Common myeloid progenitor, CD34-positive (primary cell): ENCODE measurements at regions of chr1 and their contacts with region 1.

Region 1: DNA sequence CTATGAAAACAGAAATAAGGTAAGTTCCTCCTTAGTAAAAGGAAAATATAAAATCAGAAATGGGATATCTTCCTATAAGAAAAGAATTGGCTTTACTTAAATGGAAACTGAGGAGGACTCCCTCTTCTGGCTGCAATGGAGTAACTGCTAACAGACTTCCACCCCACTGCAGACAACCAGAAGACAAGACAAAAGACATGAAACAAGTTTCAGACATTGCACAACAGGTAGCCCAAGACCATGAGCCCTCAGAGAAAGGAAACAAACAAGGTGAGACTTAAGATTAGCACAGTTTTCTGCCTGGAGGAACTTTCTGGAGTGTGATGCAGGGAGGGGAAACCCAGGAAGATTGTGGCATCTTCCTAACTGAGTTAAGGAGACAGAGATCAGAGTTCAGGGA is 17.0 kb upstream of the OLFML2B start:
- DNase-seq: peak in 2 of 3 donors; percentile 22 to 34
- H3K4me3 ChIP-seq: no peak overlapping the region
- H3K27ac ChIP-seq: no peak overlapping the region
- H3K4me1 ChIP-seq: peaks cover 0 to 4% (median 1%) of the 10 kb centered on the region in 4 experiments
- H3K27me3 ChIP-seq: no peaks in the 10 kb centered on the region

Region 2: DNA sequence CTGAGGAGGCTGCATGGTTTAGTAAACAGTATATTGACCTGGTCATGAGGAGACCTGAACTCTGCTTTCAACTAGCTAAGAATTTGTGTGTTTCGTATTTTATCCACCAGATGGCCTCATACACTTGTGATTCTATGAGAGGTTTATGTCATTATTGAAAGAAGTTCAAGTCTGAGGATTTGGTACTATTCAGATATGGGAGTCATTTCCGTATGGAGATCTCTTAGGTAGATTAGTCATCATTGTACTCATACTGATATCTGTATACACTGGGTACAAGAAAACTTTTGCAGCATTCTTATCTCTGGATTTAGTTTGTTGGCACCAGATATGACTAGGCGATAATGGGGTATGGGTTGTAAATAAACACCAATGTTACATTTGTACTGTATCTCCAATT is 247.9 kb before region 1 on chr1:
- CTCF ChIA-PET with region 1: interaction called, 144 read pairs
- POLR2A ChIA-PET with region 1: no interaction called
- DNase-seq: peak; percentile 54 to 75 (median 72)
- H3K4me3 ChIP-seq: no peak overlapping the region
- H3K27ac ChIP-seq: no peak overlapping the region
- H3K4me1 ChIP-seq: no peaks in the 10 kb centered on the region
- H3K27me3 ChIP-seq: no peaks in the 10 kb centered on the region

Region 3: GRCh38 chr1:161801955-161802354 is 238.7 kb before region 1 on chr1:
- CTCF ChIA-PET with region 1: interaction called, 144 read pairs
- POLR2A ChIA-PET with region 1: no interaction called
- DNase-seq: no peak
- H3K4me3 ChIP-seq: no peak overlapping the region
- H3K27ac ChIP-seq: no peak overlapping the region
- H3K4me1 ChIP-seq: no peaks in the 10 kb centered on the region
- H3K27me3 ChIP-seq: no peaks in the 10 kb centered on the region

Region 4: GRCh38 chr1:161864577-161864976 is 176.1 kb before region 1 on chr1:
- CTCF ChIA-PET with region 1: interaction called, 35 read pairs
- POLR2A ChIA-PET with region 1: no interaction called
- DNase-seq: peak; percentile 27 to 53 (median 51)
- H3K4me3 ChIP-seq: no peak overlapping the region
- H3K27ac ChIP-seq: no peak overlapping the region
- H3K4me1 ChIP-seq: no peaks in the 10 kb centered on the region
- H3K27me3 ChIP-seq: no peaks in the 10 kb centered on the region

Region 5: GRCh38 chr1:161905269-161905884 is 135.3 kb before region 1 on chr1:
- CTCF ChIA-PET with region 1: interaction called, 12 read pairs
- POLR2A ChIA-PET with region 1: no interaction called
- DNase-seq: peak; percentile 32 to 42 (median 40)
- H3K4me3 ChIP-seq: no peak overlapping the region
- H3K27ac ChIP-seq: no peak overlapping the region
- H3K4me1 ChIP-seq: peaks cover 0 to 6% (median 0%) of the 10 kb centered on the region in 4 experiments
- H3K27me3 ChIP-seq: no peaks in the 10 kb centered on the region

Region 6: GRCh38 chr1:162327144-162327793 is 286.6 kb after region 1 on chr1:
- CTCF ChIA-PET with region 1: no interaction called
- POLR2A ChIA-PET with region 1: no interaction called
- DNase-seq: no peak
- H3K4me3 ChIP-seq: no peak overlapping the region
- H3K27ac ChIP-seq: no peak overlapping the region
- H3K4me1 ChIP-seq: no peaks in the 10 kb centered on the region
- H3K27me3 ChIP-seq: no peaks in the 10 kb centered on the region